CD4-positive, alpha-beta T cell (primary cell): ENCODE measurements at regions of chr18 and their contacts with region 1.

Region 1: GRCh38 chr18:22933206-22933957 is at the start of gene RBBP8:
- DNase-seq: peak; percentile 55 to 90 (median 74)
- ATAC-seq: peak; percentile 67
- H3K4me3 ChIP-seq: peak within 1 kb of the TSS; percentile 97
- H3K4me3 Mint-ChIP-seq: peak within 1 kb of the TSS; percentile 89
- H3K27ac ChIP-seq: peak within 1 kb of the TSS; percentile 80 to 95
- H3K27ac Mint-ChIP-seq: peak within 1 kb of the TSS; percentile 67
- H3K4me1 ChIP-seq: peaks cover 8% of the 10 kb centered on the region
- H3K4me1 Mint-ChIP-seq: peaks cover 13% of the 10 kb centered on the region
- H3K27me3 ChIP-seq: no peaks in the 10 kb centered on the region
- H3K27me3 Mint-ChIP-seq: no peaks in the 10 kb centered on the region
- CTCF ChIP-seq: no peak
- total RNA-seq, gene RBBP8: 1.2 to 2.5 TPM

Region 2: DNA sequence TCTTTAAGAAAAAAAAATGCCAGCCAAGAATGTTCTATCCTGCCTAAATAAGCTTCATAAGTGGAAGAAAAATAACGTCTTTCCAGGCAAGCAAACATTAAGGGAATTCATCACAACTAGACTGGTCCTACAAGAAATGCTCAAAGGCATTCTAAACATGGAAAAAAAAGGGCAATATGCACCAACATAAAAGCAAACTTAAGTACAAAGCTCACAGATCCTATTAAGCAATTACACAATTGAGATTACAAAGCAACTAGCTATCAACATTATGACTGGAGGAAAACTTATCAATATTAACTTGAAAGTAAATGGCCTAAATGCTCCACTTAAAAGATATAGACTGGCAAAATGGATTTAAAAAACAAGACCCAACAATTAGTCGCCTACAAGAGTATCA is 275.1 kb before region 1 on chr18:
- CTCF ChIA-PET with region 1: no interaction called
- POLR2A ChIA-PET with region 1: no interaction called
- intact Hi-C with region 1: no loop called
- DNase-seq: no peak
- ATAC-seq: no peak
- H3K4me3 ChIP-seq: no peak overlapping the region
- H3K4me3 Mint-ChIP-seq: no peak overlapping the region
- H3K27ac ChIP-seq: no peak overlapping the region
- H3K27ac Mint-ChIP-seq: no peak overlapping the region
- H3K4me1 ChIP-seq: no peaks in the 10 kb centered on the region
- H3K4me1 Mint-ChIP-seq: no peaks in the 10 kb centered on the region
- H3K27me3 ChIP-seq: no peaks in the 10 kb centered on the region
- H3K27me3 Mint-ChIP-seq: peaks cover 4% of the 10 kb centered on the region
- CTCF ChIP-seq: no peak

Region 3: GRCh38 chr18:22943847-22944246 is 10.5 kb after region 1 on chr18:
- CTCF ChIA-PET with region 1: interaction called, 15 read pairs
- POLR2A ChIA-PET with region 1: interaction called, 4 read pairs
- intact Hi-C with region 1: no loop called
- DNase-seq: no peak
- ATAC-seq: no peak
- H3K4me3 ChIP-seq: no peak overlapping the region
- H3K4me3 Mint-ChIP-seq: no peak overlapping the region
- H3K27ac ChIP-seq: no peak overlapping the region
- H3K27ac Mint-ChIP-seq: no peak overlapping the region
- H3K4me1 ChIP-seq: no peaks in the 10 kb centered on the region
- H3K4me1 Mint-ChIP-seq: no peaks in the 10 kb centered on the region
- H3K27me3 ChIP-seq: no peaks in the 10 kb centered on the region
- H3K27me3 Mint-ChIP-seq: no peaks in the 10 kb centered on the region
- CTCF ChIP-seq: no peak

Region 4: GRCh38 chr18:23071285-23071684 is 137.9 kb after region 1 on chr18:
- CTCF ChIA-PET with region 1: no interaction called
- POLR2A ChIA-PET with region 1: interaction called, 5 read pairs
- intact Hi-C with region 1: loop called (anchors 5 kb)
- DNase-seq: peak; percentile 65 to 98 (median 80)
- ATAC-seq: peak; percentile 95
- H3K4me3 ChIP-seq: peak overlapping the region; percentile 27
- H3K4me3 Mint-ChIP-seq: peak overlapping the region; percentile 84
- H3K27ac ChIP-seq: peak overlapping the region; percentile 11 to 23
- H3K27ac Mint-ChIP-seq: peak overlapping the region; percentile 79
- H3K4me1 ChIP-seq: peaks cover 65% of the 10 kb centered on the region
- H3K4me1 Mint-ChIP-seq: peaks cover 82% of the 10 kb centered on the region
- H3K27me3 ChIP-seq: no peaks in the 10 kb centered on the region
- H3K27me3 Mint-ChIP-seq: no peaks in the 10 kb centered on the region
- CTCF ChIP-seq: no peak

Region 5: DNA sequence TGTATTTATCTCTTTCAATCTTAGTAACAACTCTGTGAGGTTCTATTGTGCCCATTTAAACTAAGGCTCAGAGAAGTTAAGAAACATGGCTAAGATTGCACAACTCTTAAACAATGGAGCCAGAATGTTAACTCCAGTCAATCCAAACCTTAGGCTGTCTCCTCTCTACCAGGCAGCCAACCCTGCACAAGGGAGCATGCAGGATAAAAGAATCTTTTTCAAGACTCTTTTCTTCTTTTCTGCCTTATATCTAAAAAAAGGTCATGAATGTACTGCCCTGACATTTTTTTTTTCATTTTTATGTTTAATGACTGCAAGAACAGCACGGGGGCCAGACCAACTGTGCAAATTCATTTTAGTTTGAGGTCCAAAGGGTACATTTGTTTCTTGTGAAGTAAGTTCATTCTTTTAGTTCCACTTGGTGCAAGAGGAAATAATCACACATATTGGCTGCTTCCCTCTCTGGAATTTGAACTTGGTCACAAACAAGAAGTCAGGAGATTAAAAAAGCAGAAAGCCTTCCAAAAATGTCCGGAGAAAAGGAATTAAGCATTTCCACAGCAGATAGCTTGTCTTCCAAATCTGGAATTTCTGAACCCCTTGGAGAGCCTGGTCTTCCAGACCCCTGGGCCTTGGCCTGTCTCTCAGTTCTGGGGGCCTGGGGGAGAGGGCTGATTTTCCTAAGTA is 423.7 kb after region 1 on chr18:
- CTCF ChIA-PET with region 1: no interaction called
- POLR2A ChIA-PET with region 1: no interaction called
- intact Hi-C with region 1: loop called in 1 of 2 experiments (anchors 5 kb)
- DNase-seq: no peak
- ATAC-seq: no peak
- H3K4me3 ChIP-seq: no peak overlapping the region
- H3K4me3 Mint-ChIP-seq: no peak overlapping the region
- H3K27ac ChIP-seq: no peak overlapping the region
- H3K27ac Mint-ChIP-seq: no peak overlapping the region
- H3K4me1 ChIP-seq: peaks cover 12% of the 10 kb centered on the region
- H3K4me1 Mint-ChIP-seq: peaks cover 16% of the 10 kb centered on the region
- H3K27me3 ChIP-seq: no peaks in the 10 kb centered on the region
- H3K27me3 Mint-ChIP-seq: no peaks in the 10 kb centered on the region
- CTCF ChIP-seq: no peak

Region 6: DNA sequence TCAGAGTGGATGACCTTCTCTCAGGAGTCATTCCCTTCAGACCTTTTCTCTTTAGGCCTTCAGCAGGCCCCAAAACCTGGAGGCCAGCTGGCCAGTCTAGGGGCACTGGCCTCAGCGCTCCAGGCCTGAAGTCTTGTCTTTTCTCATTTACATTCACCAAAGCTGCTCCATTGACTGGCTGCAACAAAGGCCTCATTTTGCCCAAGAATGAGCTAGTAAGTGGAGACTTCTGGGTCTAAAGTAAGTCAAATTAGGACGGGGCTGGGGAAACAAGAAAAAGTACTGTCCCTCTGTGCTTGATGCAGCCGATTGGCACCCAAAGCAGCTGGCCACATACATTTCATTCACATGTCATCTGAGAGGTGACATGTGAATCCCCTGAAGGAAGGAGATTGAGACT is 435.9 kb after region 1 on chr18:
- CTCF ChIA-PET with region 1: no interaction called
- POLR2A ChIA-PET with region 1: no interaction called
- intact Hi-C with region 1: no loop called
- DNase-seq: no peak
- ATAC-seq: no peak
- H3K4me3 ChIP-seq: no peak overlapping the region
- H3K4me3 Mint-ChIP-seq: no peak overlapping the region
- H3K27ac ChIP-seq: no peak overlapping the region
- H3K27ac Mint-ChIP-seq: no peak overlapping the region
- H3K4me1 ChIP-seq: no peaks in the 10 kb centered on the region
- H3K4me1 Mint-ChIP-seq: no peaks in the 10 kb centered on the region
- H3K27me3 ChIP-seq: no peaks in the 10 kb centered on the region
- H3K27me3 Mint-ChIP-seq: no peaks in the 10 kb centered on the region
- CTCF ChIP-seq: no peak

Region 7: DNA sequence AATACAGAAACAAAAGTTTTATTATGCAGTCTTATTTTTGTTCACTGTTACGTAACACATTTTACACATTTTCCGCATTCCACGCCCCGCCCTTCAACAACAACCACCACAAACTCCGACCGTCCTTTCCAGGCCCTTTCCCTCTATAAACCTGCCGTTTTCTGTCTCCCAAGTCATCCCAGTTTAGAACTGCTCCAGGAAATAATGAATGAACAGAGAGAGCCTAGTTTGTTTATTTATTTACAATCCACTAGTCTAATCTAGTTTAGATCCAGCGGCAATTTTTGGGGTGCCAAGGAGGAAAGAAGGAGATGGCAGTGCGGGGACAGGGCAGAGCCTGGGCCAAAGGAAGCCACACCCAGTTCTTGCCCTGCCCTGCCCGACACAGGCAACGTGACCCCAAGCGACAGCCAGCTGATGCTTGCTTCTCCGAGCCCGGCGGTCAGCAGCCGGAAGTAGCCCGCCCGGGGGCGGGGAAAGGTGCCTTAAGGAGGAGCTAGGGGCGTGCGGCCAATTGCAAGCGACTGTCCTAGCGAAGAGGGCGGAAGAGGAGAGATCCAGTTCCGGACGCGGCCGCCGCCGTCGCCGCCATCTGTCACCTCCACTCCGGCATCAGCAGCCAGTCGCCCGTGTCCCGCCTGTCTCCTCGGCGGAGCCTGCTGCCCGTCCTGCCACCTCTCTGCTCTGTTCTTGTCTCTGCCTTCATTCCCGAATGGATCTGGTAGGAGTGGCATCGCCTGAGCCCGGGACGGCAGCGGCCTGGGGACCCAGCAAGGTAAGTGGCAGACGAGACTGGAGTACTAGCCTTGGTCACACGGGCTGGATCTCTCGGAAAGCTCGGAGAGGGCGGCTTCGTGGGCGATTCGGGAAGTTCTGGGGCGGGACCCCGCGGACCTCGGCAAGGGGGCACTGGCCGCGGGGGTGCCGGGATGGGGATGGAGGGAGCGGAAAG is 519.6 kb after region 1 on chr18 and contains the start of gene RIOK3:
- CTCF ChIA-PET with region 1: no interaction called
- POLR2A ChIA-PET with region 1: no interaction called
- intact Hi-C with region 1: loop called in 1 of 2 experiments (anchors 5 kb)
- DNase-seq: peak; percentile 66 to 94 (median 82)
- ATAC-seq: peak; percentile 88
- H3K4me3 ChIP-seq: peak within 1 kb of the TSS; percentile 88
- H3K4me3 Mint-ChIP-seq: peak within 1 kb of the TSS; percentile 98
- H3K27ac ChIP-seq: peak within 1 kb of the TSS; percentile 80 to 81
- H3K27ac Mint-ChIP-seq: peak within 1 kb of the TSS; percentile 89
- H3K4me1 ChIP-seq: peaks cover 22% of the 10 kb centered on the region
- H3K4me1 Mint-ChIP-seq: peaks cover 53% of the 10 kb centered on the region
- H3K27me3 ChIP-seq: no peaks in the 10 kb centered on the region
- H3K27me3 Mint-ChIP-seq: no peaks in the 10 kb centered on the region
- CTCF ChIP-seq: no peak
- total RNA-seq, gene RIOK3: 151 to 153 TPM